HEK293 (cell line): ENCODE measurements at regions of chr11 and their contacts with region 1.

Region 1: GRCh38 chr11:10623797-10624761 is 55.6 kb upstream of the LYVE1 start:
- H3K4me3 ChIP-seq: no peak overlapping the region
- H3K27ac ChIP-seq: no peak overlapping the region
- H3K4me1 ChIP-seq: no peaks in the 10 kb centered on the region
- CTCF ChIP-seq: 0 out of 2 replicates have a peak, but pooled peaks have one; percentile 26

Region 2: GRCh38 chr11:9962722-9963121 is 661.4 kb before region 1 on chr11:
- CTCF ChIA-PET with region 1: no interaction called
- POLR2A ChIA-PET with region 1: no interaction called
- H3K4me3 ChIP-seq: no peak overlapping the region
- H3K27ac ChIP-seq: no peak overlapping the region
- H3K4me1 ChIP-seq: no peaks in the 10 kb centered on the region
- CTCF ChIP-seq: no peak

Region 3: DNA sequence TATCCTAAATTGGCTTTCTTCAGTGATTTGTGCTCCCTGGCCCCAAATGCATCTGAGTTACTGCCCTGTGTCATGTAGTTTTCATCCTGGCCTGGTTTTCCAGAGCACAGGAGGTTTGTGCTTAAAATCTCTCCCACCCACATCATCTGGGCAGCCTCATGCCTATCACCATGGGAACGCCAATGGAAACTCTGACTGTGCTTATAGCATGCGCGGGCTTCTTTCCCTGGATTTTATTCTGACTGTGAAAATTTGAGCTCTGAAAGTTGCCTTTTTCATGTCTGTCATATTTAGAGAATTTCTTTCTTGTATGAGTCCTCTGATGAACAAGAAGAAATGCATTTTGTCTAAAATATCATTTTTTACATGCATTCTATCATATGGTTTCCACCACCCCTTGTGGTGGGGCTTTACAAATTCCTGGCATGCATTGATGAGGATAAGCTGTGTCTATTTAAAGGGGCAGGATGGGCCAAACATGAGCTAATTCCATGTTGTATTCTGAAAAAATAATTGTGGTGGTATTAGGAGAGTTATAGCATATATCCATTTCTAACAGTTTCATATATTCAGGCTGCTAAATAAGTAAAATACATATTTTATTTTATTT is 14.3 kb after region 1 on chr11:
- CTCF ChIA-PET with region 1: interaction called, 17 read pairs
- POLR2A ChIA-PET with region 1: no interaction called
- H3K4me3 ChIP-seq: no peak overlapping the region
- H3K27ac ChIP-seq: no peak overlapping the region
- H3K4me1 ChIP-seq: no peaks in the 10 kb centered on the region
- CTCF ChIP-seq: no peak

Region 4: DNA sequence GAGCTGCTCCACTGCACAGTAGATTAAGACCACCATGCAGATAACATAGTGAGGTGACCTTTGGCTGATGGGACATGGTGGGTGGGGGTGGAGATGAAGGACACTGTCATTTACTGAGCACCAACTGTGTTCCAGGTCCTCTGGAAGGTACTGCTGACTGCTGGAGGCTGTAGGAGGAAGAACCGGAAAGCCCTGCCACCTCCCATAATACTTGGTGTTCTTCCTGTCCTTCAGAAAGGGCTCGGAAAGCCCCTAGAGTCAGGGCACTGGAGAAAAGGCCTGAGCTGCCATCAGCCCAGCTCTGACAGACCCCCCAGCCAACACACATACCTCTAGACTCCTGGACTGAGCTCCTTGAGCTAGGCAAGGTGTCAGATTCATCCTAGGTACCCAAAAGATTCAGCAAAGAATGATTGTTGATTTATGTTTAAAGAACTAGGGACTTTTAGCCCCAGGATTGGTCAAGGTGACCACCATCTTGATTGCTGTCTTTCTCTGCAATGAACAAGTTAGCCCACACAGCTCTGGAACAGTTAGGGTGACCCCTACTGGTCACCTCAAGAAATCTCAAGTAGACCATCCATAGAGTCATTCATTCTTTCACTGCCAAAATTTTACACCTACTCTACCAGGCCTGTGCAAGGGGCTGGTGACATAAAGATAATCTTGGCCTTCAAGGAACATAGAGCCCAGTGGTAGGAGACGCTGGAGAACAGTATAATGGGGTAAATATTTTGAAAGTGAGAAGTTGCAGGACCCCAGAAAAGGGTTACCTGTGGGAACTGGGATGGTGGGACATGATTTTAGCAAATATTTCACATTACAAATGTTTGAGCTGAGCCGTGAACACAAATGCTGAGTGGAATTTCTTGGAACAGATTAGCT is 30.1 kb after region 1 on chr11:
- CTCF ChIA-PET with region 1: interaction called, 11 read pairs
- POLR2A ChIA-PET with region 1: no interaction called
- H3K4me3 ChIP-seq: no peak overlapping the region
- H3K27ac ChIP-seq: no peak overlapping the region
- H3K4me1 ChIP-seq: no peaks in the 10 kb centered on the region
- CTCF ChIP-seq: 0 out of 2 replicates have a peak, but pooled peaks have one; percentile 22

Region 5: GRCh38 chr11:10735481-10736475 is 111.7 kb after region 1 on chr11:
- CTCF ChIA-PET with region 1: interaction called, 21 read pairs
- POLR2A ChIA-PET with region 1: no interaction called
- H3K4me3 ChIP-seq: no peak overlapping the region
- H3K27ac ChIP-seq: no peak overlapping the region
- H3K4me1 ChIP-seq: no peaks in the 10 kb centered on the region
- CTCF ChIP-seq: peak; percentile 94